Naive thymus-derived CD8-positive, alpha-beta T cell (primary cell): ENCODE measurements at regions of chr6 and their contacts with region 1.

Region 1: DNA sequence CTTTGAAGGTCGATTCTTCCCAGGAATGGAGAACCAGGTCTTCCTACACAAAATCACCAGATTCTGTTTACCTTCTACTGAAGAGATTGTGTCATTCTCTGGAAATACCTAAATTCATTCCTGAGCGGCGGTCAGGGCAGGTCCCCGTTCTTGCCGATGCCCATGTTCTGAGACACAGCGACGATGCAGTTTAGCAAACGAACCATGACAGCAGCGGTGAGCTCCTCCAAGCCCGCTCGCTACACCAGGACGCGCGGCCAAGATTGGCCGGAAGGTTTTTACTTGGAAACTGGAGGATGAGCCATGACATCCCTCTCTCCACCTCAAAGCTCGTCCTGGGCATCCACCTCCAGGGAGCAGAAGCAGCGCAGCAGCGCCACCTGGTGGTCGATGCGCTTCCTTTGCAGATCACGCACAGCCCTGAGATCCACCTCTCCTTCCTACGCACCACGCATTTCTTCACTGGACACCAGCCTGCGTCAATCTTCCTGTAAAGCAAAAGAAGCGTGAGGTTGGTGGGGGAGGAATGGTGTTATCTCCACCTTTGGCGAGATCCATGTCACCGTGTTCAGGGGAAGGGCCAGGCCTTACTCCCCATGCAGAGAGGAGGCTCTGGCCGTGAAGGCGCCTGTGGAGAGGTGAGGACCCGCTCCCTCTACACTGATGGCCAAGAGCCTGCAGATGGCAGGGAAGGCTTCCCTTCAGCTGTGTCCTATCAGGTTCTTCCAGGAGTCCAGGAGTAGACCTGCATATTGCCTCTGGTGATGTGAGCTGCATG is 9.9 kb upstream of the HLA-B start:
- DNase-seq: peak; percentile 74 to 94 (median 88)
- ATAC-seq: peak; percentile 98
- H3K4me3 Mint-ChIP-seq: peak overlapping the region; percentile 79 to 91 (median 84)
- H3K27ac Mint-ChIP-seq: peak overlapping the region; percentile 53 to 92 (median 87)
- H3K4me1 Mint-ChIP-seq: peaks cover 3 to 18% (median 17%) of the 10 kb centered on the region in 4 donors
- H3K27me3 Mint-ChIP-seq: peaks cover 0 to 19% (median 4%) of the 10 kb centered on the region in 5 donors

Region 2: GRCh38 chr6:31271641-31272357 is 95.1 kb before region 1 on chr6 and contains the start of gene HLA-C:
- POLR2A ChIA-PET with region 1: interaction called, 10 read pairs
- DNase-seq: peak; percentile 78 to 98 (median 93)
- ATAC-seq: peak; percentile 83 to 86
- H3K4me3 Mint-ChIP-seq: peak within 1 kb of the TSS; percentile 92 to 99 (median 96)
- H3K27ac Mint-ChIP-seq: peak within 1 kb of the TSS; percentile 98 to 100 (median 100)
- H3K4me1 Mint-ChIP-seq: peaks cover 33 to 78% (median 59%) of the 10 kb centered on the region in 4 donors
- H3K27me3 Mint-ChIP-seq: no peaks in the 10 kb centered on the region
- polyA plus RNA-seq, gene HLA-C: 2,582 to 3,026 (median 3,019) TPM

Region 3: GRCh38 chr6:31419842-31420241 is 53.0 kb after region 1 on chr6:
- POLR2A ChIA-PET with region 1: no interaction called
- DNase-seq: no peak
- ATAC-seq: no peak
- H3K4me3 Mint-ChIP-seq: no peak overlapping the region
- H3K27ac Mint-ChIP-seq: peak overlapping the region in 6 of 10 donors; percentile 3 to 71 (median 16)
- H3K4me1 Mint-ChIP-seq: peaks cover 12 to 26% (median 18%) of the 10 kb centered on the region in 4 donors
- H3K27me3 Mint-ChIP-seq: no peaks in the 10 kb centered on the region